ENCODE measurements at regions of chr3 and their contacts with region 1.

Region 1: GRCh38 chr3:100254168-100254777 is 6.5 kb upstream of the TBC1D23 start:
- DNase-seq: peak; percentile 71 to 73
- H3K4me3 ChIP-seq: no peak overlapping the region
- H3K4me1 ChIP-seq: peaks cover 12% of the 10 kb centered on the region
- H3K27me3 ChIP-seq: 0 out of 2 replicates have a peak, but pooled peaks cover 2% of the 10 kb centered on the region

Region 2: GRCh38 chr3:99833617-99834205 is 420.6 kb before region 1 on chr3:
- in situ Hi-C with region 1: loop called (anchors 10 kb)
- DNase-seq: no peak
- H3K4me3 ChIP-seq: no peak overlapping the region
- H3K4me1 ChIP-seq: peaks cover 9% of the 10 kb centered on the region
- H3K27me3 ChIP-seq: no peaks in the 10 kb centered on the region

Region 3: GRCh38 chr3:100068826-100069225 is 185.4 kb before region 1 on chr3:
- in situ Hi-C with region 1: loop called (anchors 10 kb)
- DNase-seq: peak; percentile 62 to 88
- H3K4me3 ChIP-seq: no peak overlapping the region
- H3K4me1 ChIP-seq: peaks cover 21% of the 10 kb centered on the region
- H3K27me3 ChIP-seq: no peaks in the 10 kb centered on the region

Measured in HAP-1 (cell line).